ENCODE measurements at regions of chr1 and their contacts with region 1.

Region 1: GRCh38 chr1:223133824-223134435 is 9.1 kb downstream of the TLR5 start:
- DNase-seq: peak; percentile 93
- H3K4me3 ChIP-seq: peak overlapping the region; percentile 14 to 45 (median 38)
- H3K27ac ChIP-seq: peak overlapping the region; percentile 66 to 78 (median 72)
- H3K4me1 ChIP-seq: peaks cover 0 to 51% (median 45%) of the 10 kb centered on the region in 4 donors
- H3K27me3 ChIP-seq: no peaks in the 10 kb centered on the region
- CTCF ChIP-seq: peak in 2 of 4 experiments; percentile 92 to 96
- EP300 ChIP-seq: no peak
- POLR2A ChIP-seq: no peak

Region 2: GRCh38 chr1:223062177-223062576 is 71.8 kb before region 1 on chr1:
- intact Hi-C with region 1: no loop called
- DNase-seq: no peak
- H3K4me3 ChIP-seq: no peak overlapping the region
- H3K27ac ChIP-seq: peak overlapping the region in 1 of 4 donors; percentile 52
- H3K4me1 ChIP-seq: peaks cover 0 to 25% (median 9%) of the 10 kb centered on the region in 4 donors
- H3K27me3 ChIP-seq: no peaks in the 10 kb centered on the region
- CTCF ChIP-seq: no peak
- EP300 ChIP-seq: no peak
- POLR2A ChIP-seq: no peak

Region 3: GRCh38 chr1:223429313-223429731 is 295.4 kb after region 1 on chr1:
- intact Hi-C with region 1: loop called (anchors 2 kb)
- DNase-seq: peak; percentile 93
- H3K4me3 ChIP-seq: no peak overlapping the region
- H3K27ac ChIP-seq: peak overlapping the region; percentile 23 to 75 (median 62)
- H3K4me1 ChIP-seq: peaks cover 0 to 41% (median 29%) of the 10 kb centered on the region in 4 donors
- H3K27me3 ChIP-seq: no peaks in the 10 kb centered on the region
- CTCF ChIP-seq: no peak
- EP300 ChIP-seq: peak; percentile 44 to 69 (median 54)
- POLR2A ChIP-seq: no peak

Region 4: DNA sequence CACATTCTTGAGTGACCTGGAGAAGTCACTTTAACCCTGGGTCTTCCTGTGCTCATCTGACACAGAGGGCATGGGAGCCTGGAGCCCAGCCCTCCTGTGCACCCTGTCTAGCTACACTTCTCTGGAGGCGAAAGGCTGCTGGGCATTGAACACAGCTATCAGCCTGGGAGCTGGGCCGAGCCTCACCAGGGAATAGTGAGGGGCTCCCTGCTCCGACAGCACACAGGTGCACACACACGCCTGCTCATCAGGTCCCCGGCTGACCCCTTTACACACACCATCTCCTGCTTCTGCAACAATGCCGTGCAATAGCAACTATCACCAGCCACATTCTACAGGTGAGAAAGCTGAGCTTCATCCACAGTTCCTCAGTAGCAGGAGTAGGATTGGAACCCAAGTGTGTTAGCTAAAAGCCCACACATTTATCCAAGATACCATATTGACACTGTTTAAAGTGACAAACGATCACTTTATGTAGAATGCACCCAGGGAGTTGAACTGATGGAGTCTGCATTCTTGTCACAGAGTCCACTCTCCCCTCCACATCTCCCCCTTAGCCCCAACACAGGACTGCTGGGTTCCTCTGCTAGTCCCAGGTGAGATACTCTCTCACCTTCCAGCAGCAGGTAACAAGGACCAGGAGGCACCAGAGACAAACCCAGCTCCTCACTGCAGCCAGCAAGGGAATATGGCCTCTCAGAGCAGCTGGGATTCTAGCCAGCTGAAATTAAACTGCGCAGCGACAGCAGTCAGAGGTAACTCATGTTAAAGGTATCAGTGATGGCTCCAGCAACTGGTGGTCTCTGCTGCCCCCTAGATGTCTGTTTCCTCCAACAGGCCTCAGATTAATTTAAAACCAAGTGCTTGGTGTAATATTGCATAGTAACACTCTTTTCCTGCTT is 549.9 kb after region 1 on chr1:
- intact Hi-C with region 1: loop called (anchors 1 kb)
- DNase-seq: no peak
- H3K4me3 ChIP-seq: no peak overlapping the region
- H3K27ac ChIP-seq: no peak overlapping the region
- H3K4me1 ChIP-seq: no peaks in the 10 kb centered on the region
- H3K27me3 ChIP-seq: peaks cover 0 to 3% (median 0%) of the 10 kb centered on the region in 3 donors
- CTCF ChIP-seq: peak; percentile 16 to 68 (median 52)
- EP300 ChIP-seq: no peak
- POLR2A ChIP-seq: no peak

Measured in sigmoid colon (tissue), 7 donors.